ENCODE measurements at regions of chr2 and their contacts with region 1.

Region 1: GRCh38 chr2:97707362-97708047 is 5.9 kb upstream of the ZAP70 start:
- DNase-seq: no peak
- ATAC-seq: no peak

Region 2: GRCh38 chr2:98385050-98385699 is 677.7 kb after region 1 on chr2:
- intact Hi-C with region 1: loop called (anchors 2 kb)
- DNase-seq: peak; percentile 83
- ATAC-seq: peak; percentile 62

Measured in Right ventricle myocardium inferior (tissue), 1 donor.